Activated CD4-positive, alpha-beta memory T cell treated with anti-CD3 and anti-CD28 coated beads, Interleukin-2, amount 10 ng/mL, durations not matched to agents 7 days and 5 days (primary cell): ENCODE measurements at regions of chr3 and their contacts with region 1.

Region 1: GRCh38 chr3:119600732-119601131 is 3.0 kb downstream of the PLA1A start:
- DNase-seq: peak; percentile 60
- H3K4me3 Mint-ChIP-seq: no peak overlapping the region
- H3K27ac Mint-ChIP-seq: peak overlapping the region; percentile 62
- H3K4me1 Mint-ChIP-seq: peaks cover 56% of the 10 kb centered on the region
- H3K27me3 Mint-ChIP-seq: no peaks in the 10 kb centered on the region

Region 2: GRCh38 chr3:119588112-119588511 is 12.6 kb before region 1 on chr3:
- CTCF ChIA-PET with region 1: interaction called, 12 read pairs
- POLR2A ChIA-PET with region 1: interaction called, 3 read pairs
- DNase-seq: no peak
- H3K4me3 Mint-ChIP-seq: no peak overlapping the region
- H3K27ac Mint-ChIP-seq: no peak overlapping the region
- H3K4me1 Mint-ChIP-seq: peaks cover 26% of the 10 kb centered on the region
- H3K27me3 Mint-ChIP-seq: peaks cover 6% of the 10 kb centered on the region